Naive thymus-derived CD4-positive, alpha-beta T cell (primary cell): ENCODE measurements at regions of chr15 and their contacts with region 1.

Region 1: DNA sequence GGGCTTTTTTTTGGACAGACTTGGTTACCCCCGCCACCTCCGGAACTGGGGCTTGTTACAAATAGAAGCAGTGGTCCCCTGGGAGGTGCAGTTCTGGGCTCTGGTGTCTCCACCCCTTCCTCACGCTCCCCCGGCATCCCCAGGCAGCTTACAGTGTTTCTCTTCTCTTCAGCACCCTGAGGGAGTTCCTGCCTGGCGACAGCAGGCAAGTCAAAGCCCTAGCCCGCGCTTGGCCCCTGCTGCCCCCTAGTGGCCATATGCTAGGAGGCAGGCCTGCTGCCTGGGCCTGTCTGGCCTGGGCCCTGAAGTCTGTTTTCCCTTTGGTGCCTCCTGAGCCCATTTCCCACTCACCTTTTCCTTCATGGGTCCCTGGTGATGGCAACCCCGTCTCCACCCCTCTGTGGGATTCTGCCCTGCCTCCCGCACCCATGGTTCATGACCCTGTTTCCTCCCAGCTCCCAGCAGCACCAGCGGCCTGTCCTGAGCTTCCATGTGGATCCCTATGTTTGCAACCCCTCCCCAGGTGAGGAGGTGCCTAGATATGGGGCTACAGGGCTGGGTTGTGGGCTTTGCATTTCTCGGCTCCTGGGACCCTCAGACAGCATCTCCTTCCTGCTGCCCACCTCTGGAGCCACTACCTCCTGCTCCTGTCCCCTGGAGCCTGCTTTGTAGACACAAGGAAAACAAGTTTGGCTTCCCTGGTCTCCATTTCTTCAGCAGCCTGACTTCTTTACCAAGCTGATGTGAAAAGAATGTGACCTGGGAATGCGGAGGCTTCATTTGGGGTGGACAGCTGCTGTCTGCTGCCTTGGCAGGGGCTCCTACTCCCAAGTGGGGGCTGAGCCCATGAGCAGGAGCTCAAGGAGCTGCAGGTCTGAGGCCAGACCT is 2.2 kb downstream of the SNX22 start:
- DNase-seq: peak; percentile 77 to 96 (median 88)
- ATAC-seq: peak; percentile 97
- H3K4me3 ChIP-seq: peak overlapping the region; percentile 34
- H3K4me3 Mint-ChIP-seq: peak overlapping the region; percentile 60 to 85 (median 79)
- H3K27ac ChIP-seq: peak overlapping the region; percentile 25
- H3K27ac Mint-ChIP-seq: peak overlapping the region in 6 of 9 donors; percentile 14 to 74 (median 31)
- H3K4me1 ChIP-seq: peaks cover 10 to 21% of the 10 kb centered on the region in 2 donors
- H3K4me1 Mint-ChIP-seq: peaks cover 30 to 48% (median 39%) of the 10 kb centered on the region in 7 donors
- H3K27me3 ChIP-seq: peaks cover 0 to 4% of the 10 kb centered on the region in 2 donors
- H3K27me3 Mint-ChIP-seq: peaks cover 0 to 16% (median 8%) of the 10 kb centered on the region in 5 donors

Region 2: DNA sequence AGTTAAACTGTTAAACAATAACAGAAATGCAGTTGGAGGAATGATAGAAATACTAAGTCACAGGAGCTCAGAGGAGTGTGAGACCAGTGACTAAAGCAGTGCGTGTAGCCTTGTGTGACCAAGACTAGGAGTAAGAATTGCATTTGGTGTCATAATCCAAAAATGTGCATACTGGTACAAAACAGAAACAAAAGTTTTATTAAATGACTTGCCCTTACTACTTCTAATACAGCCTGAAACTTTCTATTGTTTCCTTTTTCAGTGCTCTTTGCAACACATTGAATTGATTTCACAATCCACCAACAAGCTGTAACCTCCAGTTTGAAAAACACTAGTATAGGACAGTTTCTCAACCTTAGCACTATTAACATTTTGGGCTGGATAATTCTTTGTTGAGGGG is 40.8 kb before region 1 on chr15:
- CTCF ChIA-PET with region 1: interaction called, 3 read pairs
- POLR2A ChIA-PET with region 1: no interaction called
- intact Hi-C with region 1: loop called in 1 of 2 experiments (anchors 5 kb)
- DNase-seq: no peak
- ATAC-seq: peak; percentile 42
- H3K4me3 ChIP-seq: no peak overlapping the region
- H3K4me3 Mint-ChIP-seq: no peak overlapping the region
- H3K27ac ChIP-seq: no peak overlapping the region
- H3K27ac Mint-ChIP-seq: peak overlapping the region in 1 of 9 donors; percentile 18
- H3K4me1 ChIP-seq: peaks cover 6 to 12% of the 10 kb centered on the region in 2 donors
- H3K4me1 Mint-ChIP-seq: peaks cover 24 to 41% (median 39%) of the 10 kb centered on the region in 7 donors
- H3K27me3 ChIP-seq: no peaks in the 10 kb centered on the region
- H3K27me3 Mint-ChIP-seq: no peaks in the 10 kb centered on the region

Region 3: GRCh38 chr15:64137226-64138220 is 16.2 kb before region 1 on chr15:
- CTCF ChIA-PET with region 1: interaction called, 4 read pairs
- POLR2A ChIA-PET with region 1: no interaction called
- intact Hi-C with region 1: loop called in 1 of 2 experiments (anchors 2 kb)
- DNase-seq: no peak
- ATAC-seq: peak; percentile 42
- H3K4me3 ChIP-seq: no peak overlapping the region
- H3K4me3 Mint-ChIP-seq: no peak overlapping the region
- H3K27ac ChIP-seq: no peak overlapping the region
- H3K27ac Mint-ChIP-seq: no peak overlapping the region
- H3K4me1 ChIP-seq: no peaks in the 10 kb centered on the region
- H3K4me1 Mint-ChIP-seq: peaks cover 0 to 5% (median 0%) of the 10 kb centered on the region in 7 donors
- H3K27me3 ChIP-seq: no peaks in the 10 kb centered on the region
- H3K27me3 Mint-ChIP-seq: no peaks in the 10 kb centered on the region

Region 4: GRCh38 chr15:64825431-64826294 is 671.9 kb after region 1 on chr15 and contains the start of gene PIF1:
- CTCF ChIA-PET with region 1: no interaction called
- POLR2A ChIA-PET with region 1: no interaction called
- intact Hi-C with region 1: loop called in 1 of 2 experiments (anchors 5 kb)
- DNase-seq: peak; percentile 44 to 92 (median 87)
- ATAC-seq: peak; percentile 99
- H3K4me3 ChIP-seq: peak within 1 kb of the TSS; percentile 71
- H3K4me3 Mint-ChIP-seq: peak within 1 kb of the TSS; percentile 82 to 95 (median 88)
- H3K27ac ChIP-seq: peak within 1 kb of the TSS; percentile 37
- H3K27ac Mint-ChIP-seq: peak within 1 kb of the TSS in 8 of 9 donors; percentile 41 to 91 (median 75)
- H3K4me1 ChIP-seq: peaks cover 21 to 24% of the 10 kb centered on the region in 2 donors
- H3K4me1 Mint-ChIP-seq: peaks cover 25 to 42% (median 35%) of the 10 kb centered on the region in 7 donors
- H3K27me3 ChIP-seq: peaks cover 0 to 4% of the 10 kb centered on the region in 2 donors
- H3K27me3 Mint-ChIP-seq: peaks cover 0 to 19% (median 12%) of the 10 kb centered on the region in 5 donors
- total RNA-seq, gene PIF1: 0.34 to 30.2 (median 1.0) TPM in 3 of 5 experiments, not detected in the others